GM12878 (cell line): ENCODE measurements at regions of chr3 and their contacts with region 1.

Region 1: GRCh38 chr3:197181741-197182140 is 116.7 kb downstream of the DLG1 start:
- DNase-seq: no peak
- ATAC-seq: no peak
- H3K4me3 ChIP-seq: no peak overlapping the region
- H3K27ac ChIP-seq: no peak overlapping the region
- H3K4me1 ChIP-seq: peaks cover 3% of the 10 kb centered on the region; the same call in 1 of the 2 replicates
- H3K27me3 ChIP-seq: no peaks in the 10 kb centered on the region
- CTCF ChIP-seq: no peak
- EP300 ChIP-seq: no peak
- POLR2A ChIP-seq: no peak
- RAD21 ChIP-seq: no peak

Region 2: GRCh38 chr3:196979545-196979944 is 202.2 kb before region 1 on chr3:
- CTCF ChIA-PET with region 1: interaction called, 41 read pairs
- POLR2A ChIA-PET with region 1: no interaction called
- RAD21 ChIA-PET with region 1: interaction called, 3 read pairs
- SMC1A ChIA-PET with region 1: interaction called, 12 read pairs
- in situ Hi-C with region 1: no loop called
- intact Hi-C with region 1: no loop called
- DNase-seq: no peak
- ATAC-seq: no peak
- H3K4me3 ChIP-seq: no peak overlapping the region
- H3K27ac ChIP-seq: no peak overlapping the region
- H3K4me1 ChIP-seq: peaks cover 6% of the 10 kb centered on the region
- H3K27me3 ChIP-seq: no peaks in the 10 kb centered on the region
- CTCF ChIP-seq: no peak
- EP300 ChIP-seq: no peak
- POLR2A ChIP-seq: no peak
- RAD21 ChIP-seq: no peak